ENCODE measurements at regions of chr3 and their contacts with region 1.

Region 1: GRCh38 chr3:39499651-39500240 is 32.3 kb downstream of the MOBP start:
- DNase-seq: no peak
- ATAC-seq: no peak
- H3K4me3 ChIP-seq: no peak overlapping the region
- H3K27ac ChIP-seq: no peak overlapping the region
- H3K4me1 ChIP-seq: peaks cover 2% of the 10 kb centered on the region
- H3K27me3 ChIP-seq: peaks cover 5% of the 10 kb centered on the region

Region 2: GRCh38 chr3:39189959-39190269 is 309.8 kb before region 1 on chr3:
- intact Hi-C with region 1: no loop called
- DNase-seq: peak; percentile 60 to 75 (median 70)
- ATAC-seq: peak; percentile 13 to 35
- H3K4me3 ChIP-seq: peak overlapping the region; percentile 69
- H3K27ac ChIP-seq: peak overlapping the region; percentile 25
- H3K4me1 ChIP-seq: peaks cover 2% of the 10 kb centered on the region
- H3K27me3 ChIP-seq: no peaks in the 10 kb centered on the region

Region 3: GRCh38 chr3:39415983-39416382 is 83.8 kb before region 1 on chr3:
- intact Hi-C with region 1: loop called in 1 of 4 experiments (anchors 5 kb)
- DNase-seq: no peak
- ATAC-seq: peak; percentile 16 to 41
- H3K4me3 ChIP-seq: no peak overlapping the region
- H3K27ac ChIP-seq: no peak overlapping the region
- H3K4me1 ChIP-seq: peaks cover 4% of the 10 kb centered on the region
- H3K27me3 ChIP-seq: no peaks in the 10 kb centered on the region

Region 4: DNA sequence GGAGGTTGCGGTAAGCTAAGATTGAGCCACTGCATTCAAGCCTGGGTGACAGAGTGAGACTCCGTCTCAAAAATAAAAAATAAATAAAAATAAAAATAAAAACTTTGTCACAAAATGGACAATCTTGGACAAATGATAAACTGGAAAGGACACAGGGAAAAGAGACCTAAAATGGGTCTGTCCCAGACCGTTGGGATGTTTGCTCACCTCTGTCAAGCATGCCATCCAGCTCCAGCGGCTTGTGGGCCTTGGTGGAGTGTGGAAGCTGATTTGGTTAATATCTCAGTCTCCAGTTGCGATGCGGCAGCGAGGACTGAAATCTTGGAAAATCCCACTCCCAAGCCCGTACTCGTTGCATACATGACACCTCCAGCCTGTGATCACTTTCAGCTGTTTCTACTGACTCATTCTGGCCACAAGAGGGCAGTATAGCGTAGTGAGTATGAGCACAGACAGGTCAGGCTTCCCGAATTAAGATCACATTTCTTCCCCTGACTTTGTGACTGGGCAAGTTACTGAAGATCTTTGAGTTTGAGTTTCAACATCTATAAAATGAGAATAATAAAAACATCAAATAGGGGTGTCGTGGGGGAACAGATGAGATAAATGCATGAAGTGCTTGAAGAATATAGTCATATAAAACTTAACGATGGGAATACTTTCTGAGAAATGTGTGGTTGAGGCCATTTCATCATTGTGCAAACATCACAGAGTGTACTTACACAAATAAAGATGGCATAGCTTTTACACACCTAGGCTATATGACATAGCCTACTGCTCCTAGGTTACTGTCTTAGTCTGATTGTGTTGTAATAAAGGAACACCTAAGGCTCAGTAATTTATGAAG is 51.9 kb before region 1 on chr3:
- intact Hi-C with region 1: loop called in 3 of 4 experiments (anchors 5 kb)
- DNase-seq: peak in 2 of 3 donors; percentile 25 to 54
- ATAC-seq: peak; percentile 90 to 93
- H3K4me3 ChIP-seq: no peak overlapping the region
- H3K27ac ChIP-seq: no peak overlapping the region
- H3K4me1 ChIP-seq: no peaks in the 10 kb centered on the region
- H3K27me3 ChIP-seq: no peaks in the 10 kb centered on the region

Region 5: GRCh38 chr3:39754549-39754948 is 254.8 kb after region 1 on chr3:
- intact Hi-C with region 1: no loop called
- DNase-seq: no peak
- ATAC-seq: no peak
- H3K4me3 ChIP-seq: no peak overlapping the region
- H3K27ac ChIP-seq: no peak overlapping the region
- H3K4me1 ChIP-seq: no peaks in the 10 kb centered on the region
- H3K27me3 ChIP-seq: no peaks in the 10 kb centered on the region